PC-3 (cell line): ENCODE measurements at regions of chr6 and their contacts with region 1.

Region 1: GRCh38 chr6:109595998-109596397 is 95.0 kb downstream of the AK9 start:
- DNase-seq: peak; percentile 52
- ATAC-seq: peak; percentile 49; the same call in 1 of the 2 replicates
- H3K4me3 ChIP-seq: no peak overlapping the region
- H3K27ac ChIP-seq: no peak overlapping the region
- H3K4me1 ChIP-seq: no peaks in the 10 kb centered on the region
- H3K27me3 ChIP-seq: no peaks in the 10 kb centered on the region
- CTCF ChIP-seq: peak; percentile 48; the same call in 1 of the 2 replicates

Region 2: GRCh38 chr6:109296452-109296851 is 299.5 kb before region 1 on chr6:
- CTCF ChIA-PET with region 1: no interaction called
- POLR2A ChIA-PET with region 1: no interaction called
- intact Hi-C with region 1: no loop called
- DNase-seq: peak; percentile 35
- ATAC-seq: peak; percentile 77
- H3K4me3 ChIP-seq: no peak overlapping the region
- H3K27ac ChIP-seq: peak overlapping the region; percentile 28; the same call in 1 of the 2 replicates
- H3K4me1 ChIP-seq: peaks cover 39% of the 10 kb centered on the region
- H3K27me3 ChIP-seq: no peaks in the 10 kb centered on the region
- CTCF ChIP-seq: no peak

Region 3: GRCh38 chr6:109690737-109691621 is 95.0 kb after region 1 on chr6 and contains the starts of genes AK9 and FIG4:
- CTCF ChIA-PET with region 1: interaction called, 7 read pairs
- POLR2A ChIA-PET with region 1: no interaction called
- intact Hi-C with region 1: loop called (anchors 2 kb)
- DNase-seq: peak; percentile 90
- ATAC-seq: peak; percentile 95
- H3K4me3 ChIP-seq: peak within 1 kb of the TSS; percentile 93
- H3K27ac ChIP-seq: peak within 1 kb of the TSS; percentile 33
- H3K4me1 ChIP-seq: peaks cover 23% of the 10 kb centered on the region
- H3K27me3 ChIP-seq: no peaks in the 10 kb centered on the region
- CTCF ChIP-seq: peak; percentile 30; the same call in 1 of the 2 replicates
- total RNA-seq, gene AK9: 1.7 and 3.5 TPM in 2 replicates
- total RNA-seq, gene FIG4: 5.7 and 6.0 TPM in 2 replicates